ENCODE measurements at regions of chr13 and their contacts with region 1.

Region 1: GRCh38 chr13:42048682-42049453 is 420 bp downstream of the DGKH start:
- DNase-seq: peak; percentile 90
- ATAC-seq: peak; percentile 92

Region 2: DNA sequence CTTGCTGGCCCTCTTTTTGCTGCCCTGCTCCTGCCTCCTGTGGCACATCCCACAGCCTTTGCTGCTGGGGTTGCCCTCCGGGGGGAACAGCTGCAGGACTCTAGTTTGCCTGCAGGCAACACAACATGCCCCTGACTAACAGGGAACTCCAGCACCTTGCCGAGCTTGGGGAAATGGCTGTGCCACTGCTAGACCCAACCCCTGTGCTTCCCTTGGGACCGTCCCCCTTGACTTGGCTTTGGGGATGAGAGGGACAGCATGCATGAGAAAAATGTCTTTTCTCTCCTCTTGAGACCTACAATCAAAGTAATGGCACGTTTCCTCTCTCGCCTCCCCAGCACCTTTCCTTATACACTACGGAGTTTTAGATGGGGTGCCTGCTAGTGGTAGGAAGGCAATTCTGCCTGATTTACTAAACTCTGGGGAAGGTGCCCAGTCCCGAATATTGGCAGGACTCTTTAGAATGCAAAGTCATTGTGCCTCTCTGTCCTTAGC is 75.6 kb before region 1 on chr13:
- intact Hi-C with region 1: no loop called
- DNase-seq: no peak
- ATAC-seq: peak; percentile 57

Region 3: DNA sequence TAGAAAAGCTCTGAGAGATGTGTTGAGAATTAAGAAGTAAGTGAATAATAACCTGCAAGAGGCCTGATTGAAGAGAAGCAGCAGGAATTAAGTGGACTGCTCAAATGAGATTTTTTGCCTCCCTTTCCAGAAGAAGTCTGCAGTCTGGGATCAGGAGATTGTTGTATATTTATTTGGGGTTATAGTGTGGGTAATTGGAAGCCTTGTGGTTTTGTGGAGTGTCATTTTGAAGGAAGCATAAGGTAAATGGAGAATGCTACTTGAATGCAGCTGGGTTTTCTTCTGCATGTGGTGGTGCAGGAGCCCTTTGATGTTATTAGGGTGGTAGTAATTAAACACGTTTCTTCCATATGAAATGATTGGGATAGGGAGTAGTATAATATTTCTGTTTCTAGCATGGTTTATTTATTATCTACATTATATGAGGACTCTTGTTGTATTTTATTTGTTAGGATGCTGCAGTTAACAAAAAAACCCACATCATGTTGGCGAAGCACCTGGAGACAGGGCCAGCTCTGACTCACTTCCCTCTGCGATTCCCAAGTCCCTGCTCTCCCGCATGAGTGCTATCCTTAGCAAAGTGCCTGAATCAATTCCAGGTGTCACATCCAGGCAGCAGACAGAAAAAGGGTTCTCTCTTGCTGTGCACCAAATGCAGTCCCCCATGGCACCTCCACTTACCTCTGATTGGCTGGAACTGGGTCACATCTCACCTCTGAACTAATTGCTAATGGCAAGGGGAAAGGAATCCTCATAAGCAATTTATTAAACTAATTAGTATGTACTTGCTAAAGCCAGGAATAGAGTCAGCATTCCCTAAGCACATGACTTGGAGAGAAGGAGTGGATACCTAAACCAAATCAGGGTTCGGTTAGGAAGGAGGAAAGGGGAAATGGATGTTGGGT is 54.3 kb after region 1 on chr13:
- intact Hi-C with region 1: loop called (anchors 5 kb)
- DNase-seq: no peak
- ATAC-seq: no peak

Region 4: GRCh38 chr13:42229294-42229693 is 180.4 kb after region 1 on chr13:
- intact Hi-C with region 1: no loop called
- DNase-seq: no peak
- ATAC-seq: no peak

Region 5: GRCh38 chr13:42271337-42272114 is 222.7 kb after region 1 on chr13:
- intact Hi-C with region 1: loop called (anchors 5 kb)
- DNase-seq: peak; percentile 95
- ATAC-seq: peak; percentile 98

Region 6: GRCh38 chr13:42420304-42420703 is 371.4 kb after region 1 on chr13:
- intact Hi-C with region 1: no loop called
- DNase-seq: no peak
- ATAC-seq: no peak